Activated CD8-positive, alpha-beta T cell treated with anti-CD3 and anti-CD28 coated beads, Interleukin-2, amount 10 ng/mL, durations not matched to agents 7 days and 5 days (primary cell): ENCODE measurements at regions of chr9 and their contacts with region 1.

Region 1: GRCh38 chr9:6055213-6055612 is 39.8 kb upstream of the RANBP6 start:
- DNase-seq: peak; percentile 75
- ATAC-seq: peak; percentile 68
- H3K4me3 Mint-ChIP-seq: no peak overlapping the region
- H3K27ac Mint-ChIP-seq: no peak overlapping the region
- H3K4me1 Mint-ChIP-seq: peaks cover 3% of the 10 kb centered on the region
- H3K27me3 Mint-ChIP-seq: peaks cover 16% of the 10 kb centered on the region

Region 2: GRCh38 chr9:6015278-6016157 is 39.7 kb before region 1 on chr9 and contains the start of gene RANBP6:
- CTCF ChIA-PET with region 1: interaction called, 14 read pairs
- POLR2A ChIA-PET with region 1: no interaction called
- DNase-seq: peak; percentile 95
- ATAC-seq: peak; percentile 99
- H3K4me3 Mint-ChIP-seq: peak within 1 kb of the TSS; percentile 91
- H3K27ac Mint-ChIP-seq: peak within 1 kb of the TSS; percentile 98
- H3K4me1 Mint-ChIP-seq: peaks cover 49% of the 10 kb centered on the region
- H3K27me3 Mint-ChIP-seq: no peaks in the 10 kb centered on the region
- total RNA-seq, gene RANBP6: 20.2 to 21.6 TPM

Region 3: GRCh38 chr9:6024020-6024554 is 31.1 kb before region 1 on chr9:
- CTCF ChIA-PET with region 1: interaction called, 22 read pairs
- POLR2A ChIA-PET with region 1: no interaction called
- DNase-seq: peak; percentile 57
- ATAC-seq: peak; percentile 82
- H3K4me3 Mint-ChIP-seq: peak overlapping the region; percentile 26
- H3K27ac Mint-ChIP-seq: no peak overlapping the region
- H3K4me1 Mint-ChIP-seq: peaks cover 8% of the 10 kb centered on the region
- H3K27me3 Mint-ChIP-seq: peaks cover 4% of the 10 kb centered on the region

Region 4: GRCh38 chr9:6040077-6040476 is 15.1 kb before region 1 on chr9:
- CTCF ChIA-PET with region 1: interaction called, 14 read pairs
- POLR2A ChIA-PET with region 1: no interaction called
- DNase-seq: no peak
- ATAC-seq: no peak
- H3K4me3 Mint-ChIP-seq: no peak overlapping the region
- H3K27ac Mint-ChIP-seq: no peak overlapping the region
- H3K4me1 Mint-ChIP-seq: no peaks in the 10 kb centered on the region
- H3K27me3 Mint-ChIP-seq: peaks cover 38% of the 10 kb centered on the region

Region 5: DNA sequence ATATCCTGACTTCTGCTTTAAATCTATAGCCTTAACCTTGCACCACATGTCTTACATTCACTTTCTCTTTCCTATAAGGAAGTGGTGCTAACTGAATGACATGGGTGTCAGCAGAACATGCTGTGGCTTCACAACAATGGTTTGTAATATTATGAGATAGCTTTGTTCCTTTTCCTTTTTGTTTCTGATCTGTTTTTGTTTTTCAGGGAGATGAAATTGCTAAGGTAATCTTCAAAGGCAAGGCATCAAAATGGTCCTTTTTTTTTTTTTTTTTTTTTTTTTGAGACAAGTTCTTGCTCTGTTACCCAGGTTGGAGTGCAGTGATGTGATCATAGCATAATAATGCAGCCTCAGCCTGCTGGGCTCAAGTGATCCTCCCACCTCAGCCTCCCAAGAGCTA is 13.8 kb after region 1 on chr9:
- CTCF ChIA-PET with region 1: interaction called, 36 read pairs
- POLR2A ChIA-PET with region 1: no interaction called
- DNase-seq: peak; percentile 49
- ATAC-seq: peak; percentile 98
- H3K4me3 Mint-ChIP-seq: peak overlapping the region; percentile 64
- H3K27ac Mint-ChIP-seq: peak overlapping the region; percentile 91
- H3K4me1 Mint-ChIP-seq: peaks cover 19% of the 10 kb centered on the region
- H3K27me3 Mint-ChIP-seq: peaks cover 3% of the 10 kb centered on the region

Region 6: GRCh38 chr9:6305954-6306563 is 250.8 kb after region 1 on chr9:
- CTCF ChIA-PET with region 1: interaction called, 46 read pairs
- POLR2A ChIA-PET with region 1: no interaction called
- DNase-seq: no peak
- ATAC-seq: no peak
- H3K4me3 Mint-ChIP-seq: no peak overlapping the region
- H3K27ac Mint-ChIP-seq: no peak overlapping the region
- H3K4me1 Mint-ChIP-seq: no peaks in the 10 kb centered on the region
- H3K27me3 Mint-ChIP-seq: peaks cover 20% of the 10 kb centered on the region